ENCODE measurements at regions of chr10 and their contacts with region 1.

Region 1: DNA sequence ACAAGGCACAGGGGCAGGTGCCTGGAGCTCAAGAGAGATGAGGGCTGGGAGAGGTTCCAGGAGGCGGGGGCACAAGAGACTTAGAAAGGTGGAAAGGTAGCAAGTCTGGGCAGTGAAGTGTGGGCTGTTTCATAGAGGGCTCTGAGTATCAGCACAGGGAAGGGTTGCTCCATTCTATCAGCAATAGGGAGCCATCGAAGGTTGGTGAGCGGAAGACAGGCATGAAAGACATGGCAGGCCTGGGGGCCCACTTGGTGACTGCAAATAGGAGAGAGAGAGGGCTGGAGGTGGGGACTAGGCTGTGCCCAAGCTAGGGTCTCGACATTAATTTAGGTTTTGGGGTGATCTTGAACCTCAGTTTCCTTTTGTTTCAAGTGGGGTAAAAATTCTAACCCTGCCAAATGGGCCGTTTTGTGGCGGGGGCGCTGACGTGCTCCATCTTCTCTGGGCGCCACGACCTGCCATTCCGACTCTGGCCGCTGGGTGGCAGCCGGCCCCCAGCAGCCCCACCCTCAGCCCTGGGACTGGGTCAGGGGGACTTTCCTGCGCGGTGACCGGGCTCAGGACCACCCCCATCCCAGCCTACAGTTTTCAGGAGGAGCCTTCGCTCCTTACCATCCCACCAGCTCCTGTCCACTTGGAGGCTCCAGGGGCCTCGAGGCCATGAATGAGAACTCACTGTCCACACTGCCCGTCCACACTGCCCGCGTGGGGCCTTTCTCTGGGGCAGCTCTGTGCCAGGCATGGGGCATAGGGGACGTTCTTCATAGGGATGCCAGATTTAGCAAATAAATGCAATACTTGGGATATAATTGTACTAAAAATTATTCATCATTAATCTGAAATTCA is 37.2 kb upstream of the PCBD1 start:
- DNase-seq: peak; percentile 14 to 29 (median 15)
- H3K4me3 ChIP-seq: no peak overlapping the region
- H3K4me3 Mint-ChIP-seq: no peak overlapping the region
- H3K27ac ChIP-seq: no peak overlapping the region
- H3K27ac Mint-ChIP-seq: no peak overlapping the region
- H3K4me1 ChIP-seq: no peaks in the 10 kb centered on the region
- H3K4me1 Mint-ChIP-seq: peaks cover 9% of the 10 kb centered on the region
- H3K27me3 ChIP-seq: no peaks in the 10 kb centered on the region
- H3K27me3 Mint-ChIP-seq: peaks cover 0 to 5% (median 0%) of the 10 kb centered on the region in 3 donors
- CTCF ChIP-seq: peak; percentile 97

Region 2: DNA sequence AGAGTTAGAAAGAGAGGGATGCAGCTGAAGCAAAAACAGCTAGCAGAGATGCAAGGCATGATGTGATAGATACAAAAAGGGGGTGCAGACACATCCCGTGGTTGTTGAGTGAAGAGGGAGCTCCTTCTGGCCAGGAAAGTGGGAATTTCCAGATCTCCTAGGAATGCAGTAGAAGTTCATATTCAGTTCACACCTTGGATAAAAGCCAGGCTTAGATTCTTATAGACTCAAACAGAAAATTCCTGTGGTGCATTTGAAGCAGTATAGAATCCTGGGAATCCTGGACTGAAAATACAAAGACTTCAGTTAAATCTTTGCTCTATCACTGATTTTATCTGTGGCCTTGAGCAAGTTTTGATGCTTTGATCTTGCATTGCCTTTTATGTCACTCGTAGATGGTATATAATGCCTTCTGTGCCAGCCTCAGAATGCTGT is 76.0 kb before region 1 on chr10:
- intact Hi-C with region 1: no loop called
- DNase-seq: no peak
- H3K4me3 ChIP-seq: no peak overlapping the region
- H3K4me3 Mint-ChIP-seq: no peak overlapping the region
- H3K27ac ChIP-seq: no peak overlapping the region
- H3K27ac Mint-ChIP-seq: peak overlapping the region in 1 of 7 donors; percentile 7
- H3K4me1 ChIP-seq: no peaks in the 10 kb centered on the region
- H3K4me1 Mint-ChIP-seq: peaks cover 6% of the 10 kb centered on the region
- H3K27me3 ChIP-seq: no peaks in the 10 kb centered on the region
- H3K27me3 Mint-ChIP-seq: no peaks in the 10 kb centered on the region
- CTCF ChIP-seq: no peak

Region 3: DNA sequence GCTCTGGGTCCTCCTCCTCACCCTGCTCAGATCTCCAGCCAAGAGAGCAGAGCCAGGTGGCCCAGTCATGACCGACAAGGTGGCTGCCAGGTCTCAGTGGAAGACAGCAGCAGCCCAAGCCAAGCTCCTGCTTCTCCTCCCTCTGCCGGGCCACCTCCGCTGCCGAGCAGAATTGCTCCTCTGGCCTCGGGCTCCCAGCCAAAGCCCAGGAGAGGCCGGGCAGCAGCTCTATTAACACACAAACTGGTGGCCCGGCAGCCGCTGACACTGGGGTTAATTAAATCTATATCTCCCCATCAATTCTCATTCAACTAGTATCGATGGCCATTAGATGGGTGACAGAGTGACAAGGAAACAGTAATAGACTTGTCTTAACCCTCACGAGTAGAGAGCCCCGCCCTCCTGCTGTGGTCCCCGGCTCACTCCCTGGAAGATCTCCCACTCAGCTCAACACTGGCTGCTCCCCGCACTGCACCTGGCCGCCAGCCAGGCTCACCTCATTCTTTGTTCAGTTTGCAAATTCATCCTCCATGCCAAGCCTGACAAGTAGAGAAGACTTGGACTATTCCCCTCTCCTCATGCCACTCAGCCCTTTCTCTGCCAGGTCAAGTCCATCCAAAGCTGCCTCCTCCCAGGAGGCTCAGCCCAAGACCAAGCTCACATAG is 212.7 kb after region 1 on chr10:
- intact Hi-C with region 1: no loop called
- DNase-seq: no peak
- H3K4me3 ChIP-seq: no peak overlapping the region
- H3K4me3 Mint-ChIP-seq: no peak overlapping the region
- H3K27ac ChIP-seq: no peak overlapping the region
- H3K27ac Mint-ChIP-seq: peak overlapping the region in 1 of 7 donors; percentile 0
- H3K4me1 ChIP-seq: no peaks in the 10 kb centered on the region
- H3K4me1 Mint-ChIP-seq: no peaks in the 10 kb centered on the region
- H3K27me3 ChIP-seq: no peaks in the 10 kb centered on the region
- H3K27me3 Mint-ChIP-seq: peaks cover 2 to 6% (median 4%) of the 10 kb centered on the region in 3 donors
- CTCF ChIP-seq: no peak

Region 4: GRCh38 chr10:71212318-71213126 is 286.9 kb after region 1 on chr10 and contains the start of gene UNC5B:
- intact Hi-C with region 1: loop called (anchors 5 kb)
- DNase-seq: peak; percentile 48 to 59 (median 50)
- H3K4me3 ChIP-seq: peak within 1 kb of the TSS; percentile 45 to 81 (median 63)
- H3K4me3 Mint-ChIP-seq: peak within 1 kb of the TSS; percentile 80 to 93
- H3K27ac ChIP-seq: no peak within 1 kb of the TSS
- H3K27ac Mint-ChIP-seq: no peak within 1 kb of the TSS
- H3K4me1 ChIP-seq: peaks cover 23 to 42% of the 10 kb centered on the region in 2 donors
- H3K4me1 Mint-ChIP-seq: peaks cover 32% of the 10 kb centered on the region
- H3K27me3 ChIP-seq: peaks cover 55 to 75% of the 10 kb centered on the region in 2 donors
- H3K27me3 Mint-ChIP-seq: peaks cover 68 to 84% (median 80%) of the 10 kb centered on the region in 3 donors
- CTCF ChIP-seq: peak; percentile 11
- polyA plus RNA-seq, gene UNC5B: 0.04 to 0.72 TPM in 2 of 3 donors, not detected in the other

Region 5: DNA sequence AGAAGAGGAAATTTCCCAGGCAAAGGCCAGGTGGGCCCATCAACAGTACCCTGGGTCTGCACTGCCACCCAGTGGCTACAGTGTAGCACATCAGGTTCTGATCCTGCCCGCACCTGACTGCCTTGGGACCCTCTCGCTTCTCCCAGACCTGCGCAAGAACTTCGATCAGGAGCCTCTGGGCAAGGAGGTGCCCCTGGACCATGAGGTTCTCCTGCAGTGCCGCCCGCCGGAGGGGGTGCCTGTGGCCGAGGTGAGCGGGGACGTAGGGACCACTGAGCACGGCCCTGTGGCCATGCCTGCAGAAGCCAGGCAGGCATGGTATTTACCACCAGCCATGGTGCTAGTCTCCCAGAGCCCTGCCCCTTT is 359.6 kb after region 1 on chr10:
- intact Hi-C with region 1: loop called in 1 of 2 experiments (anchors 5 kb)
- DNase-seq: peak in 2 of 3 donors; percentile 16
- H3K4me3 ChIP-seq: no peak overlapping the region
- H3K4me3 Mint-ChIP-seq: no peak overlapping the region
- H3K27ac ChIP-seq: no peak overlapping the region
- H3K27ac Mint-ChIP-seq: peak overlapping the region in 1 of 7 donors; percentile 40
- H3K4me1 ChIP-seq: peaks cover 8 to 10% of the 10 kb centered on the region in 2 donors
- H3K4me1 Mint-ChIP-seq: peaks cover 18% of the 10 kb centered on the region
- H3K27me3 ChIP-seq: no peaks in the 10 kb centered on the region
- H3K27me3 Mint-ChIP-seq: peaks cover 0 to 8% (median 2%) of the 10 kb centered on the region in 3 donors
- CTCF ChIP-seq: peak; percentile 72